ENCODE measurements at regions of chr4 and their contacts with region 1.

Region 1: GRCh38 chr4:57163530-57164459 is 53.6 kb upstream of the IGFBP7 start:
- DNase-seq: peak; percentile 93
- H3K4me3 Mint-ChIP-seq: peak overlapping the region; percentile 90
- H3K27ac Mint-ChIP-seq: peak overlapping the region; percentile 71
- H3K4me1 Mint-ChIP-seq: peaks cover 13% of the 10 kb centered on the region
- H3K27me3 Mint-ChIP-seq: peaks cover 24% of the 10 kb centered on the region

Region 2: GRCh38 chr4:57147335-57148060 is 16.3 kb before region 1 on chr4:
- intact Hi-C with region 1: no loop called
- DNase-seq: no peak
- H3K4me3 Mint-ChIP-seq: no peak overlapping the region
- H3K27ac Mint-ChIP-seq: no peak overlapping the region
- H3K4me1 Mint-ChIP-seq: no peaks in the 10 kb centered on the region
- H3K27me3 Mint-ChIP-seq: peaks cover 1% of the 10 kb centered on the region

Region 3: DNA sequence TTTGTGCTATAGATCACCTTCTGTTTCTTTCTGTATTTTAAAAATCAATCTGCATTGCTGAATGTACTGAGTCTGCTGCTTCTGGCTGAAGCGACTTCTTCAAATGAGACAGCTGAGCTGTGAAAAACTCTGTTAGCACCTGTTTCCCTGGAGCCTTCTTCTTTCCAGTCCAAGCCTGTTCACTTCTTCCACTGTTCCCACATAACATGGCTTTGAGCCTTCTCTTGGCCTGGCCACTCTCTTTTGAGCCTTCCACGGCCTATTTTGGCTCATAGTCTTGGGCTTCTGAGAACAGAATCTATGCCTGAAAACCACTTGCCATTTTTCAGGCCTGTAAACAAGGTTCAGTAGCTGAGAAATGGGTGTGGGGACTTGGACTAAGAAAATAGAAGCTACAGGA is 79.3 kb after region 1 on chr4:
- intact Hi-C with region 1: no loop called
- DNase-seq: no peak
- H3K4me3 Mint-ChIP-seq: no peak overlapping the region
- H3K27ac Mint-ChIP-seq: no peak overlapping the region
- H3K4me1 Mint-ChIP-seq: no peaks in the 10 kb centered on the region
- H3K27me3 Mint-ChIP-seq: no peaks in the 10 kb centered on the region

Region 4: GRCh38 chr4:57426779-57427395 is 263.1 kb after region 1 on chr4:
- intact Hi-C with region 1: loop called (anchors 2 kb)
- DNase-seq: peak; percentile 78
- H3K4me3 Mint-ChIP-seq: no peak overlapping the region
- H3K27ac Mint-ChIP-seq: no peak overlapping the region
- H3K4me1 Mint-ChIP-seq: no peaks in the 10 kb centered on the region
- H3K27me3 Mint-ChIP-seq: no peaks in the 10 kb centered on the region